Activated naive CD8-positive, alpha-beta T cell treated with anti-CD3 and anti-CD28 coated beads, Interleukin-2, amount 10 ng/mL, durations not matched to agents 7 days and 5 days (primary cell): ENCODE measurements at regions of chr12 and their contacts with region 1.

Region 1: GRCh38 chr12:4269279-4269991 is 4.1 kb upstream of the CCND2 start:
- DNase-seq: peak; percentile 95
- ATAC-seq: peak; percentile 5
- H3K4me3 Mint-ChIP-seq: peak overlapping the region; percentile 90
- H3K27ac Mint-ChIP-seq: peak overlapping the region; percentile 95
- H3K4me1 Mint-ChIP-seq: peaks cover 19% of the 10 kb centered on the region
- H3K27me3 Mint-ChIP-seq: peaks cover 7% of the 10 kb centered on the region

Region 2: DNA sequence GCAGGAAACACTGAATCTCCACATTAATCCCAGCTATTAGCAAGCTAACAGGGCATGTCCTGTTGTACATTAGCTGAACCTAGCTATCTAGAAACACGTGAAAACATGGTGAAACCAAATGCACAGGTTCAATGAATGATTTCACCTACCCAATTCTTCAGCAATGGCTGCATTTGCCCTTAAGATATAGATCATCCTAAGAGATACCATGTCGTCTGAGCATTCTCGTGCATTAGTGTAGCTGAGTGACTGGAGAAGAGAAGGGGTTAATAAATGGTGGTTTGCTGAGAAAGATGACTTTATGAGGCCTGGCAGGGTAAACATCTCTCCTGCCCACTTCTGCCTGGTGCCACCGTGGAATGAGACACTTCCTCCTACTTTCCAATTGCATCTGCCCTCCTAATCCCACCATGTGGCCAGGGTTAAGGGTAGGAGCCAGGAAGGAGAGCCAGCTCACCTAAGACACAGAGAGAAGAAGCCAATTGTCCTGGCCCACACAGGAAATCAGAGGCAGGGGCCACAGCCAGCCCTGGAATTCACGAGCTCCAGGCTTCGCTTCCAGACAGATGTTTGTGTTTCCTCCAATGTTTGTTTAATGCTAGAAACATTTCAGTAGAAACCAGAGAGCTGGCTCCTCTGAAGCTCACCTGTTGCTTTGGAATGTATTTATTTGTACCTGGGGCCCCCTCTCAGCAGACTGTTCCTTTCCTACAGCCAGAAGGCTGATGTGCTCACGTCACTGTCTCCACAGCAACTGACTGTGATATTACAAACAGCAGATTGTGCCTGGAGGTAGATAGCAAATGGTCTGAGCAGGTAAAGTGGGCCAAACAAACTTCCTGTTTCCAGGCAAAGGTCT is 270.2 kb before region 1 on chr12:
- POLR2A ChIA-PET with region 1: interaction called, 13 read pairs
- DNase-seq: no peak
- ATAC-seq: no peak
- H3K4me3 Mint-ChIP-seq: no peak overlapping the region
- H3K27ac Mint-ChIP-seq: no peak overlapping the region
- H3K4me1 Mint-ChIP-seq: peaks cover 24% of the 10 kb centered on the region
- H3K27me3 Mint-ChIP-seq: peaks cover 4% of the 10 kb centered on the region

Region 3: GRCh38 chr12:4164559-4165558 is 104.6 kb before region 1 on chr12:
- POLR2A ChIA-PET with region 1: interaction called, 41 read pairs
- DNase-seq: peak; percentile 79
- ATAC-seq: peak; percentile 98
- H3K4me3 Mint-ChIP-seq: peak overlapping the region; percentile 82
- H3K27ac Mint-ChIP-seq: peak overlapping the region; percentile 90
- H3K4me1 Mint-ChIP-seq: peaks cover 35% of the 10 kb centered on the region
- H3K27me3 Mint-ChIP-seq: no peaks in the 10 kb centered on the region

Region 4: GRCh38 chr12:4215229-4216186 is 53.9 kb before region 1 on chr12:
- POLR2A ChIA-PET with region 1: interaction called, 14 read pairs
- DNase-seq: peak; percentile 55
- ATAC-seq: peak; percentile 88
- H3K4me3 Mint-ChIP-seq: peak overlapping the region; percentile 74
- H3K27ac Mint-ChIP-seq: peak overlapping the region; percentile 91
- H3K4me1 Mint-ChIP-seq: peaks cover 35% of the 10 kb centered on the region
- H3K27me3 Mint-ChIP-seq: peaks cover 4% of the 10 kb centered on the region